Activated CD4-positive, alpha-beta T cell treated with anti-CD3 and anti-CD28 coated beads for 36 hours (primary cell): ENCODE measurements at regions of chr19 and their contacts with region 1.

Region 1: GRCh38 chr19:37077934-37078725 is at the start of gene ZNF420:
- DNase-seq: peak; percentile 93
- ATAC-seq: peak; percentile 95
- H3K4me3 Mint-ChIP-seq: peak within 1 kb of the TSS; percentile 97
- H3K27ac Mint-ChIP-seq: peak within 1 kb of the TSS; percentile 98
- H3K4me1 Mint-ChIP-seq: peaks cover 23% of the 10 kb centered on the region
- H3K27me3 Mint-ChIP-seq: no peaks in the 10 kb centered on the region
- total RNA-seq, gene ZNF420: 9.1 to 12.8 TPM

Region 2: DNA sequence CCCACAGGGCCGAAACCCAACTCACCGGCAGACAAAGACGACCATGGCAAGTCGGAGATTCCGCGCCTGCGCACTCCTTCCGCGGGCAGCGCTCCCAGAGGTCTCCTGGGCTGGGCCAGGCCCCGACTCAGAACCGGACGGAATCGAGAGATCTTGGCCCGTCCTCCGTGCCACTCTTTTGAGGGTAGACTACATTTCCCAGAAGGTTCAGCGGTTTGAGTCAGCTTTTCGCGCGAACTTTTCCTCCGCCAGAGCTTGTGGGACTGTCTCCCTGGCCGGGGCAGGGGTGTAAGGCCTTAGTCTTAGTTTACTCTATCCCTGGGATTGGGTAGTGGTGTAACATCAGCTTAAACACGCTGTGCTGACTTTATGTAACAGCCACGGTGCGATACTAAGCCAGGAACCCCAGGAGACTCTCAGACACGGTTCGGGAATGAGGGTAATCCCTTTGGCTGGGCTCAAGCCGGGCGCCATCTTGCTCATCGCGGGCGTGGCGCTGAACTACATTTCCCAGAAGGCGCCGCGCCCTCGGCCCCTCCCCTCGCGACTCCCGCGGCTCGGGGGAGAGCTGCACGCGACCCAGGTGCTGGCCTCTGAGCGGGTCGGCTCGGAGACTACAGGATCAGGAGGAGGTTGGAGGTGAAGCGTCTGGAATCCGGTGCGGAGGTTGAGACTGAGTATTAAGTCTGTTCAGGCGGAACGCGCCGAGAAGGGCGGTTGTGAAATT is 549.8 kb before region 1 on chr19 and contains the start of gene ZNF260:
- CTCF ChIA-PET with region 1: no interaction called
- POLR2A ChIA-PET with region 1: no interaction called
- intact Hi-C with region 1: loop called in 1 of 2 experiments (anchors 1 kb)
- DNase-seq: peak; percentile 97
- ATAC-seq: peak; percentile 91
- H3K4me3 Mint-ChIP-seq: peak within 1 kb of the TSS; percentile 87
- H3K27ac Mint-ChIP-seq: peak within 1 kb of the TSS; percentile 96
- H3K4me1 Mint-ChIP-seq: peaks cover 14% of the 10 kb centered on the region
- H3K27me3 Mint-ChIP-seq: no peaks in the 10 kb centered on the region
- total RNA-seq, gene ZNF260: 5.7 to 8.2 TPM

Region 3: GRCh38 chr19:36687214-36688056 is 390.7 kb before region 1 on chr19 and contains the start of gene ZNF567:
- CTCF ChIA-PET with region 1: no interaction called
- POLR2A ChIA-PET with region 1: no interaction called
- intact Hi-C with region 1: loop called in 1 of 2 experiments (anchors 1 kb)
- DNase-seq: peak; percentile 99
- ATAC-seq: peak; percentile 93
- H3K4me3 Mint-ChIP-seq: peak within 1 kb of the TSS; percentile 99
- H3K27ac Mint-ChIP-seq: peak within 1 kb of the TSS; percentile 96
- H3K4me1 Mint-ChIP-seq: peaks cover 27% of the 10 kb centered on the region
- H3K27me3 Mint-ChIP-seq: no peaks in the 10 kb centered on the region
- total RNA-seq, gene ZNF567: 7.4 to 8.6 TPM

Region 4: DNA sequence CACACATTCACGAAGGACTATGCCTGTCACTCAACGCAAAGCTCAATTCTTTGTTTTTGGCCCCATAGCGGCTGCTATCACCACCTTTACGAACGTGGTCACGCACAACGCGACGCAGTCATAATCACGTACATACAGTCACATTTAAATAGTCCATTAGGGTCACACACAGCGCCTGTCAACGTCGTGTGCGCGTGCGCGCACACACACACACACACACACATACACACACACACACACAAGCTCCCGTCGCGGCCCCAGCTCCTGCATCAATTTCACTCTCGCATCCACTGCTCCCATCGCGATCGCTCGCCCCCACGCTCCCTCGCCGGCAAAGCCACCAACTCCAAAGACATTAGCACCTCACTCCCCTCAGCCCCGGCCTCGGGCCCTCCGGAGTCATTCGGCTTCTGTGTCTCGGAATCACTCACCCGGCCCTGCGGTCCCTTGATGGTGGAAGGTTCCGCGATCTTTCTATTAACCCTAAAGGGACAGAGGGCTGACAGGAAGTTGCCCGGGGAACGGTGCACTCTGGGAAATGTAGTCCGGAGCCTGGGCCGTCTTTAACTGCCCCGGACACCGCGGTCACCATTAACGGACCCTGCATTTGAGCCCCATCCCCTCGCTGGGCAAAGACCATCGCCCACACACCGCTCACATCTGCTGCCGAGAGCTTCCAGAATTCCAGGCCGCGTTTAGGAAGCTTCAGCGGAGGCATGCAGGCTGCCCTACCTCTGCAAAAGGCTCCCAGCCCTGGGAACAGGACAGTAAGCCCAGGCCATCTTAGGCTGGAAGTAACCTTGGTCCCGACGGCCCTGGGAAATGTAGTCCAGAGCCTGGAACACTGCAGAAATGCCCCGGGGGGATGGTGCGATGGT is 240.0 kb before region 1 on chr19 and contains the start of gene ZNF790:
- CTCF ChIA-PET with region 1: no interaction called
- POLR2A ChIA-PET with region 1: no interaction called
- intact Hi-C with region 1: loop called in 1 of 2 experiments (anchors 1 kb)
- DNase-seq: peak; percentile 92
- ATAC-seq: peak; percentile 97
- H3K4me3 Mint-ChIP-seq: no peak within 1 kb of the TSS
- H3K27ac Mint-ChIP-seq: peak within 1 kb of the TSS; percentile 72
- H3K4me1 Mint-ChIP-seq: peaks cover 2% of the 10 kb centered on the region
- H3K27me3 Mint-ChIP-seq: no peaks in the 10 kb centered on the region
- total RNA-seq, gene ZNF790: 7.1 to 8.8 TPM

Region 5: GRCh38 chr19:37045140-37045539 is 33.0 kb before region 1 on chr19:
- CTCF ChIA-PET with region 1: no interaction called
- POLR2A ChIA-PET with region 1: no interaction called
- intact Hi-C with region 1: no loop called
- DNase-seq: no peak
- ATAC-seq: no peak
- H3K4me3 Mint-ChIP-seq: no peak overlapping the region
- H3K27ac Mint-ChIP-seq: no peak overlapping the region
- H3K4me1 Mint-ChIP-seq: no peaks in the 10 kb centered on the region
- H3K27me3 Mint-ChIP-seq: no peaks in the 10 kb centered on the region

Region 6: DNA sequence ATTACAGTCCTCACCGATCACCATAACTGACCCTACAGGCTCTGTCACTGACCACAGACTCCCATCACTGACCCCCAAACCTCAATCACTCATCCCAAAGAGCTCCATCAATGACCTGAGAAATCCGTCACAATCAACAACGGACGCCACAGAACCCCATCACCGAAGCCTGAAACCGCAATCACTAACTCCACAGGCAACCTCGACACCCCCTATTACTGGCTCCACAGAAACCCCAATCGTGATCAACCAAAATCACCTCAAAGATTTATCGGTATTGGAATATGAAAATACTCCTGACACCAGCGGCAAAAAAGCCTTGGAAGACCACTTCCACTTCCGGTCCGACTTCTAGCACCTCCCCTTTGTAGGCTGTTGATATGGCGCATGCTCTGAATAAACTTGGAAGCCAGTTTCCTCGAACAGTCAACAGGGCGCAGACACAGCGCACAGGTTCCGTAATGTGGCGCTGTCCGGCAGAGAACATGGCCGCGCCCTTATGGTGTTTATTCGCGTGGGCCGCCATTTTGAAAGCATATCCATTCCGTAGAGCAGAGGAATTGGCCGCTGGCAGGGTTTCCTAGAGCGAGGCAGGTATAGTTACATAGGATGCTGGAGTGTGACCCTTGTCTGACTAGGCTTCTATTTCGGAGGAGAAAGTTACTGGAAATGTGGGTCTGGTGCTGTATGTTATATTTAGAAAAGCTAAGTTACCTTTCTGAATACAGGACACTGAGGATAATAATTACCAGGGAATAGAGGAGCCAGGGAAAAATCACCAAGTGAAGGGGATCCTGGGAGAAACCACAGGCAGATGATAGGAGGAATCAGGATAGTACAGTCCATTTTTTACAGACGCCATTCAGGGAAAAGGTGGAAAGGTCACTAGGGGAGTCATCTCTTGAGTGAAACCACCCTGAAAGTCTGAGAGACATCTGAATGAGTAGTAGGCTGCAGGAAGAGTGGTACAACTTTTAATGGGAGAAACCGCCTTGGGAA is 94.5 kb after region 1 on chr19 and contains the start of gene ZNF585A:
- CTCF ChIA-PET with region 1: no interaction called
- POLR2A ChIA-PET with region 1: no interaction called
- intact Hi-C with region 1: loop called in 1 of 2 experiments (anchors 1 kb)
- DNase-seq: peak; percentile 92
- ATAC-seq: peak; percentile 100
- H3K4me3 Mint-ChIP-seq: no peak within 1 kb of the TSS
- H3K27ac Mint-ChIP-seq: no peak within 1 kb of the TSS
- H3K4me1 Mint-ChIP-seq: no peaks in the 10 kb centered on the region
- H3K27me3 Mint-ChIP-seq: no peaks in the 10 kb centered on the region
- total RNA-seq, gene ZNF585A: 8.7 to 9.8 TPM

Region 7: GRCh38 chr19:37506387-37507166 is 428.4 kb after region 1 on chr19 and contains the start of gene ZNF793:
- CTCF ChIA-PET with region 1: no interaction called
- POLR2A ChIA-PET with region 1: no interaction called
- intact Hi-C with region 1: loop called in 1 of 2 experiments (anchors 1 kb)
- DNase-seq: peak; percentile 87
- ATAC-seq: peak; percentile 87
- H3K4me3 Mint-ChIP-seq: no peak within 1 kb of the TSS
- H3K27ac Mint-ChIP-seq: no peak within 1 kb of the TSS
- H3K4me1 Mint-ChIP-seq: no peaks in the 10 kb centered on the region
- H3K27me3 Mint-ChIP-seq: no peaks in the 10 kb centered on the region
- total RNA-seq, gene ZNF793: 4.4 to 4.7 TPM

Region 8: DNA sequence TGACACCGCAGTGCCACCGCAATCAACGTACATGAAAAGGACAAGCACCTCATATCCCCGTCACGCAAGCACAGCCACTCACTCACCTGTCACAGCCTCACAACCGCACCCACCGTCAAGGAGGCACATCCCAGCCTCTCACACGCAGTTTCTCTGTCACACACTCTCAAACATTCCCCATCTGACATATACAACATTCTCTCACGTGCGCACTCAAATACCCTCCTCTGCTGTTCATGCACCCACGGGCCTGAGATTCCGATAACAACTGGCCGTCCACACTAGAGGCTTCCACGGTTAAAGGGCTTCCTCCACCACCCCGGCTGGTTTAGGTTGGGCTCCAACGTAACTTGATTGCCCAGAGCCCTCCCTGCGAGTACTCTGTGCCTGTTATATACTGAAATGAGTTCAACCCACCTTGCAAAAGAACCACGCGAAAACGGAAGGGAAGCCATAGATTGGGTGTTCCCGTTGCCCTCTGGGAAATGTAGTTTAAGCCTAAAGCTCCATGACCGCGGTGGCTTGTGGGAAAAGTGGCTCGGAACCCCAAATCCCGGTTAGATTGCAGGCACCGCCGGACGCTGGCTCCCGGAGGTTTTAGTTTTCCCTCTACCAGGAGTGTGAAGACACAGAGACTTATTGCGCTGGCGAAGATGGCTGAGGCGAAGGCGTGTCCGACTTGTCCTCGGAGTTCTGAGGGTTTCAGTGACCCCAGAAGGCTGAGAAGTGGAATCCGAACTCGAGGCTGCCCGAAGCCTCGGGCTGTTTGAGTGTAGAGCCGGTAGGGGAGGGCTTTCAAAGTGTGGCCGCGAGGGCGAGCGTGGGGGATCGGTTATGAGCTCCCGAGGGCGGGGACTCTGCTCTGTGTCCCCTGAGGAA is 701.2 kb after region 1 on chr19 and contains the start of gene ZNF573:
- CTCF ChIA-PET with region 1: no interaction called
- POLR2A ChIA-PET with region 1: no interaction called
- intact Hi-C with region 1: loop called in 1 of 2 experiments (anchors 2 kb)
- DNase-seq: peak; percentile 90
- ATAC-seq: peak; percentile 94
- H3K4me3 Mint-ChIP-seq: peak within 1 kb of the TSS; percentile 95
- H3K27ac Mint-ChIP-seq: peak within 1 kb of the TSS; percentile 96
- H3K4me1 Mint-ChIP-seq: peaks cover 22% of the 10 kb centered on the region
- H3K27me3 Mint-ChIP-seq: no peaks in the 10 kb centered on the region
- total RNA-seq, gene ZNF573: 8.9 to 9.7 TPM